CD4-positive, alpha-beta memory T cell (primary cell): ENCODE measurements at regions of chr20 and their contacts with region 1.

Region 1: GRCh38 chr20:45934586-45935415 is at the start of gene PCIF1:
- DNase-seq: peak; percentile 98 to 99 (median 98)
- H3K4me3 ChIP-seq: peak within 1 kb of the TSS; percentile 83 to 97
- H3K4me3 Mint-ChIP-seq: peak within 1 kb of the TSS; percentile 95 to 99 (median 97)
- H3K27ac ChIP-seq: peak within 1 kb of the TSS; percentile 99
- H3K27ac Mint-ChIP-seq: peak within 1 kb of the TSS; percentile 96 to 99 (median 98)
- H3K4me1 ChIP-seq: peaks cover 35% of the 10 kb centered on the region
- H3K4me1 Mint-ChIP-seq: peaks cover 17 to 48% (median 30%) of the 10 kb centered on the region in 4 donors
- H3K27me3 ChIP-seq: no peaks in the 10 kb centered on the region
- H3K27me3 Mint-ChIP-seq: no peaks in the 10 kb centered on the region
- total RNA-seq, gene PCIF1: 63.1 to 69.4 TPM

Region 2: GRCh38 chr20:45798935-45799642 is 135.7 kb before region 1 on chr20:
- CTCF ChIA-PET with region 1: interaction called, 17 read pairs
- POLR2A ChIA-PET with region 1: interaction called, 6 read pairs
- intact Hi-C with region 1: no loop called
- DNase-seq: peak; percentile 56 to 62 (median 60)
- H3K4me3 ChIP-seq: no peak overlapping the region
- H3K4me3 Mint-ChIP-seq: no peak overlapping the region
- H3K27ac ChIP-seq: no peak overlapping the region
- H3K27ac Mint-ChIP-seq: peak overlapping the region in 6 of 7 donors; percentile 3 to 89 (median 46)
- H3K4me1 ChIP-seq: peaks cover 7% of the 10 kb centered on the region
- H3K4me1 Mint-ChIP-seq: peaks cover 4 to 11% (median 8%) of the 10 kb centered on the region in 4 donors
- H3K27me3 ChIP-seq: no peaks in the 10 kb centered on the region
- H3K27me3 Mint-ChIP-seq: no peaks in the 10 kb centered on the region

Region 3: DNA sequence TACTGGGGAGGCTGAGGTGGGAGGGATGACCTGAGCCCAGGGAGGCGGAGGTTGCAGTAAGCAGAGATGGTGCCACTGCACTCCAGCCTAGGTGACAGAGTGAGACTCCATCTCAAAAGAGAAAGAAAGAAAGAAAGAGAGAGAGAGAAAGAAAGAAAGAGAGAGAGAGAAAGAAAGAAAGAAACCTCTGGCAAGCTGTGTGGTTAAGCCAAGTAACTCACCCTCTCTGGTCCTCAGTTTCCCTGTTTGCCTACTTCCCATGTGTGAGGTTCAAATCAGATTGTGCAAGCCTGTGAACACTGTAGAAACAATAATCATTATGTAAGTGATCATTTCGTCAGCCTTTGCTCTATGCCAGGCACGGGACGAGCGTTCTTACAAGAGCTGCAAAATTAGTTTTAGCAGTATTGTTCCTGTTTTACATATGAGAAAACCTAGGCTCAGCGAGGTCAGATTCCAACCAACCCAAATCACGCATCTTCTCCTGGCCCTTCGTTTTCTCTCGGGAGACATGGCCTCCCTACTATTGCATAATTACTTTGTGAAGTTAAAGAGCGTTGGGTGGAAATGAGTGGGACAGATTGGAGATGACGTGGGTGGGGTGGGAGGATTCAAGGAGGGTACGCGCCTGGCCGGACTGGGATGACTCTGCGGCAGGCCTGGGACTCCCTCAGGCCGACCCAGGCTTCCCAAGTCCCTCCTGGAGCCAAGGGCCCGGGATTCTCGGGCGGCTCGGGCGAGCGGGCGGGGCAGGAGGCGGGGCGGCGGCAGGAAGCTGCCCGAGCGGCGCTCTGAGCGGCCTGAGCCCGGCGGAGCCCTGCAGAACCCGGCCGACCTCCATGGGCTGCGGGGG is 101.5 kb before region 1 on chr20 and contains the start of gene SNX21:
- CTCF ChIA-PET with region 1: no interaction called
- POLR2A ChIA-PET with region 1: interaction called, 17 read pairs
- intact Hi-C with region 1: no loop called
- DNase-seq: peak in 2 of 5 donors; percentile 22 to 28
- H3K4me3 ChIP-seq: peak within 1 kb of the TSS; percentile 3 to 64
- H3K4me3 Mint-ChIP-seq: peak within 1 kb of the TSS; percentile 77 to 91 (median 84)
- H3K27ac ChIP-seq: peak within 1 kb of the TSS; percentile 21
- H3K27ac Mint-ChIP-seq: peak within 1 kb of the TSS; percentile 4 to 79 (median 13)
- H3K4me1 ChIP-seq: peaks cover 21% of the 10 kb centered on the region
- H3K4me1 Mint-ChIP-seq: peaks cover 7 to 23% (median 13%) of the 10 kb centered on the region in 4 donors
- H3K27me3 ChIP-seq: no peaks in the 10 kb centered on the region
- H3K27me3 Mint-ChIP-seq: peaks cover 0 to 3% of the 10 kb centered on the region in 2 donors
- total RNA-seq, gene SNX21: 2.6 to 3.5 TPM

Region 4: DNA sequence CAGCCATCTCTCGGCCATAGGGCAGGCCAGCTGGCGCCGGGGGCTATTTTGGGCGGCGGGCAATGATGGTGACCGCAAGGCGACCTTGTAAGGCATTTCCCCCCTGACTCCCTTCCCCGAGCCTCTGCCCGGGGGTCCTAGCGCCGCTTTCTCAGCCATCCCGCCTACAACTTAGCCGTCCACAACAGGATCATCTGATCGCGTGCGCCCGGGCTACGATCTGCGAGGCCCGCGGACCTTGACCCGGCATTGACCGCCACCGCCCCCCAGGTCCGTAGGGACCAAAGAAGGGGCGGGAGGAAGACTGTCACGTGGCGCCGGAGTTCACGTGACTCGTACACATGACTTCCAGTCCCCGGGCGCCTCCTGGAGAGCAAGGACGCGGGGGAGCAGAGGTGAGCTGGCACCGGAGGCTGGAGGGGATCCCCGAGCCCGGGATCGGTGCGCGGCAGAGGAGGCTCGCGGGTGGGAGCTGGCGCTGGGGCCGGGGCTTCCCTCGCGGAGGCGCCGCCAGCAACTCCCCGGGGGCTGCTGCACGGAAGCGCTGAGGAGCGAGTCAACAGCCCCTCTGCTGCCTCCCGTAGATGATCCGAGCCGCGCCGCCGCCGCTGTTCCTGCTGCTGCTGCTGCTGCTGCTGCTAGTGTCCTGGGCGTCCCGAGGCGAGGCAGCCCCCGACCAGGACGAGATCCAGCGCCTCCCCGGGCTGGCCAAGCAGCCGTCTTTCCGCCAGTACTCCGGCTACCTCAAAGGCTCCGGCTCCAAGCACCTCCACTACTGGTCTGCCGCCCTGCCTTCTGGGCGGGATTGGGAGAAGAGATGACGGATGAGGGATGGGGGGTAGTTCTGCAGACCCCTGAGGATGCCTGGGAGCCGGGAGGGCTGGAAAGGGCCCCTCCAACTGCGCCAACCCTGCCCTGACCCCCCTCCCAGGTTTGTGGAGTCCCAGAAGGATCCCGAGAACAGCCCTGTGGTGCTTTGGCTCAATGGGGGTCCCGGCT is 43.5 kb before region 1 on chr20 and contains the starts of genes CTSA and NEURL2:
- CTCF ChIA-PET with region 1: interaction called, 11 read pairs
- POLR2A ChIA-PET with region 1: interaction called, 141 read pairs
- intact Hi-C with region 1: loop called (anchors 1 kb)
- DNase-seq: peak; percentile 79 to 88 (median 83)
- H3K4me3 ChIP-seq: peak within 1 kb of the TSS; percentile 69 to 79
- H3K4me3 Mint-ChIP-seq: peak within 1 kb of the TSS; percentile 91 to 97 (median 93)
- H3K27ac ChIP-seq: peak within 1 kb of the TSS; percentile 74
- H3K27ac Mint-ChIP-seq: peak within 1 kb of the TSS; percentile 76 to 94 (median 90)
- H3K4me1 ChIP-seq: peaks cover 37% of the 10 kb centered on the region
- H3K4me1 Mint-ChIP-seq: peaks cover 19 to 48% (median 33%) of the 10 kb centered on the region in 4 donors
- H3K27me3 ChIP-seq: no peaks in the 10 kb centered on the region
- H3K27me3 Mint-ChIP-seq: no peaks in the 10 kb centered on the region
- total RNA-seq, gene CTSA: 102 to 103 TPM
- total RNA-seq, gene NEURL2: 5.5 to 5.6 TPM

Region 5: GRCh38 chr20:45946149-45946970 is 11.6 kb after region 1 on chr20:
- CTCF ChIA-PET with region 1: interaction called, 4 read pairs
- POLR2A ChIA-PET with region 1: interaction called, 175 read pairs
- intact Hi-C with region 1: no loop called
- DNase-seq: peak in 3 of 5 donors; percentile 21 to 66 (median 30)
- H3K4me3 ChIP-seq: no peak overlapping the region
- H3K4me3 Mint-ChIP-seq: no peak overlapping the region
- H3K27ac ChIP-seq: no peak overlapping the region
- H3K27ac Mint-ChIP-seq: peak overlapping the region in 4 of 7 donors; percentile 48 to 74 (median 72)
- H3K4me1 ChIP-seq: peaks cover 3% of the 10 kb centered on the region
- H3K4me1 Mint-ChIP-seq: peaks cover 2 to 22% (median 14%) of the 10 kb centered on the region in 4 donors
- H3K27me3 ChIP-seq: no peaks in the 10 kb centered on the region
- H3K27me3 Mint-ChIP-seq: no peaks in the 10 kb centered on the region

Region 6: GRCh38 chr20:45971675-45972499 is 37.1 kb after region 1 on chr20 and contains the start of gene ZNF335:
- CTCF ChIA-PET with region 1: interaction called, 91 read pairs
- POLR2A ChIA-PET with region 1: interaction called, 245 read pairs
- intact Hi-C with region 1: loop called (anchors 1 kb)
- DNase-seq: peak; percentile 92 to 98 (median 96)
- H3K4me3 ChIP-seq: peak within 1 kb of the TSS; percentile 79 to 97
- H3K4me3 Mint-ChIP-seq: peak within 1 kb of the TSS; percentile 91 to 99 (median 95)
- H3K27ac ChIP-seq: peak within 1 kb of the TSS; percentile 100
- H3K27ac Mint-ChIP-seq: peak within 1 kb of the TSS; percentile 99 to 100 (median 100)
- H3K4me1 ChIP-seq: peaks cover 30% of the 10 kb centered on the region
- H3K4me1 Mint-ChIP-seq: peaks cover 14 to 33% (median 22%) of the 10 kb centered on the region in 4 donors
- H3K27me3 ChIP-seq: no peaks in the 10 kb centered on the region
- H3K27me3 Mint-ChIP-seq: peaks cover 2 to 8% of the 10 kb centered on the region in 2 donors
- total RNA-seq, gene ZNF335: 62.5 to 63.2 TPM

Region 7: DNA sequence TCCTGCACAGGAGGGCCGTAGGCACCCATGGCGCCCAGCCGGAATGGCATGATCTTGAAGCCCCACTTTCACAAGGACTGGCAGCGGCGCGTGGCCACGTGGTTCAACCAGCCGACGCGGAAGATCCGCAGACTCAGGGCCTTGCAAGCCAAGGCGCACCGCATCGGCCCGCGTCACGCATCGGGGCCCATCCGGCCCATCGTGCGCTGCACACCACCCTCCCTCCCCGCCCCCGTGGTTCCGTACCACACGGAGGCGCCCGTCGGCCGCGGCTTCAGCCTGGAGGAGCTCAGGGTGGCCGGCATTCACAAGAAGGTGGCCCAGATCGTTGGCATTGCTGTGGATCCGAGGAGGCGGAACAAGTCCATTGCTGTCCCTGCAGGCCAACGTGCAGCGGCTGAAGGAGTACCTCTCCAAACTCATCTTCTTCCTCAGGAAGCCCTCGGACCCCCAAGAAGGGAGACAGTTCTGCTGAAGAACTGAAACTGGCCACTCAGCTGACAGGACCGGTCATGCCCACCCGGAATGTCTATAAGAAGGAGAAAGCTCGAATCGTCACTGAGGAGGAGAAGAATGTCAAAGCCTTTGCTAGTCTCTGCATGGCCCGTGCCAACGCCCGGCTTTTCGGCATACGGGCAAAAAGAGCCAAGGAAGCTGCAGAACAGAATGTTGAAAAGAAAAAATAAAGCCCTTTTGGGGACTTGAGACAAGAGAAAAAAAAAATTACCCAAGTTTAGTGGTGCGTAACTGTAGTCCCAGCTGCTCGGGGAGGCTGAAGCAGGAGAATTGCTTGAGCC is 164.9 kb after region 1 on chr20:
- CTCF ChIA-PET with region 1: no interaction called
- POLR2A ChIA-PET with region 1: no interaction called
- intact Hi-C with region 1: no loop called
- DNase-seq: no peak
- H3K4me3 ChIP-seq: no peak overlapping the region
- H3K4me3 Mint-ChIP-seq: no peak overlapping the region
- H3K27ac ChIP-seq: no peak overlapping the region
- H3K27ac Mint-ChIP-seq: no peak overlapping the region
- H3K4me1 ChIP-seq: no peaks in the 10 kb centered on the region
- H3K4me1 Mint-ChIP-seq: no peaks in the 10 kb centered on the region
- H3K27me3 ChIP-seq: peaks cover 20% of the 10 kb centered on the region
- H3K27me3 Mint-ChIP-seq: peaks cover 25 to 30% of the 10 kb centered on the region in 2 donors

Region 8: DNA sequence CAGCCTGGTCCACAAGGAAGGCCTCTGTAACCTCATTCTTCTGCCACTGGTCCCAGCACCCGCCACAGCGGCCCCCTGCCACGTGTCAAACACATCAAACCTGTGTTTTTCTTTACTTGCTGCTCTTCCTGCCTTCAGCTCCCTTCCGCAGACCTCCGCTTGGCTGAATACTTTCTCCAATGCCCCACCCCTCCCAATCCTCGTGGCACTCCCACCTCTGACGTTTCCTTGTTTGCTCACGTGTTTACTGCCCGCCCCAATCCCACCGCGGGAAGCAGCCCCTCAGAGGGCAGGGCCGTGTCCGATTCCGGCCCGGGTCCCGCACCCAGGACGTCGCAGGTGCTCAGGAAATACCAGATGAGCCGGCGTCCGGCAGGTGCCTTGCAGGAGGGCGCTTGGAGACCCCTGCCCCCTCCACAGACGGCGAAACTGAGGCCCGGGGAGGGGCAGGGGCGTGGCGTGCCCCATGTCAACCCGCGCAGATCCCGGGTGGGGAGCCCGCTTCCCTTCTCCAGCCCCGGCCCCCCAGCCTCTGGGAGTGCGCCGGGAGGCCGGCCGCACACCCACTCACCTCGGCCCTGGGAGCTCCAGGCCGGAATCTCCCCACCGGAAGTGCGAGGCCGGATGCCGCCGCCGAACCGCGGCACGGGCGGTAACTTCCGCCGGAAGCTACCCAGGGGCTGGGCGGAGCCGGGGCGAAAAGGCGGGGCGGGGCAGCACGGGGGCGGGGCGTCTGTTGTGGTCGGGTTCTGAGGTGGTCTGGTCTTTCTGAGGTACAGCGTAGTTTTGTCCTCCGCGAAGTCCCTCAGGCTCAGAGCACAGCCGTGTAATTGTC is 429.2 kb after region 1 on chr20:
- CTCF ChIA-PET with region 1: no interaction called
- POLR2A ChIA-PET with region 1: interaction called, 18 read pairs
- intact Hi-C with region 1: loop called (anchors 1 kb)
- DNase-seq: peak; percentile 82 to 89 (median 86)
- H3K4me3 ChIP-seq: peak overlapping the region; percentile 73 to 95
- H3K4me3 Mint-ChIP-seq: peak overlapping the region; percentile 88 to 97 (median 92)
- H3K27ac ChIP-seq: peak overlapping the region; percentile 99
- H3K27ac Mint-ChIP-seq: peak overlapping the region; percentile 84 to 99 (median 98)
- H3K4me1 ChIP-seq: peaks cover 78% of the 10 kb centered on the region
- H3K4me1 Mint-ChIP-seq: peaks cover 63 to 83% (median 73%) of the 10 kb centered on the region in 4 donors
- H3K27me3 ChIP-seq: no peaks in the 10 kb centered on the region
- H3K27me3 Mint-ChIP-seq: no peaks in the 10 kb centered on the region